ENCODE measurements at regions of chr1 and their contacts with region 1.

Region 1: GRCh38 chr1:26500488-26501175 is 28.4 kb downstream of the HMGN2 start:
- DNase-seq: peak; percentile 93
- H3K4me3 Mint-ChIP-seq: peak overlapping the region; percentile 87
- H3K27ac Mint-ChIP-seq: peak overlapping the region; percentile 96
- H3K4me1 Mint-ChIP-seq: peaks cover 18% of the 10 kb centered on the region
- H3K27me3 Mint-ChIP-seq: no peaks in the 10 kb centered on the region

Region 2: DNA sequence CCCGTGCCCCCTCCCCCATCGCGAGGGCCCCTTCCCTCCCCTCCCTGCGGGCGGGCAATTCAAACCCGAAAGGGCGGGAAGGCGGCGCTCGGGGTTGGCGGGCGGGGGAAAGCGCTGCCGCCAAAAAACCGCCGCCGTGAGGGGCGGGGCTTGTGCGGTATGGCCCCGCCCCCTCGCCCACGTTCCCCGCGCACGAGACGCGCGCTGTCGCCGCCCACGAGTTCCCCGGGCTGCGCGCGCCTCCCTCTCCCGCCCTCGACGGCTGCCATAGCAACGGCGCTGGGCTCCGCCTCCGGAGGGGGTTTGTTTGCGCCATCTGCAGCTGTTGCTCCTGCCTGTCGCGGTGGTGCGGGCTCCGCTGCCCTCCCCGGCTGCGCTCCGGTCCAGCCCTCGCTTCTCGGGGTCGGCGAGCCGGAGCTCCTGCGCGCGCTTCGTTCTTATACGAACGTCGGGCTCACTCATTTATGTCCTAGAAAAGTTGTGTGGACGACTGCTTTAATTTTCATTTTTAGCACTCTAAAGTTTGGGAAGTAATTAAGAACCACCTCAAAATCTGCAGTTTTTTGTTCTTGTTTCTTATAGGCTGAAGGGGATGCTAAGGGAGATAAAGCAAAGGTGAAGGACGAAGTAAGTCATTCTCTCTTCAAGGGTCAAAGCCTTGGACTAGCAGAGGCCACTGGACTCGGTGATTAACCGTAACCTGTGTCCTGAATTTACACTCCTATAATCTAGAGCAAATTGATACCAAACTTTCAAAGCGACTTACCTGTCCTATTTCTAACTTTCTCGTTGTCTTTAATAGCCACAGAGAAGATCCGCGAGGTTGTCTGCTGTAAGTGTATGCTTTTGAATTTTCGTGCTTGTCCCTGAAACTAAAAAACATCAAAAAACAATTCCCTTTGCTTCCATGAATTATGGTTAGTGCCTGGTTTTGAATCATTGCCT is 27.5 kb before region 1 on chr1:
- CTCF ChIA-PET with region 1: interaction called, 3 read pairs
- intact Hi-C with region 1: loop called (anchors 1 kb)
- DNase-seq: peak; percentile 96
- H3K4me3 Mint-ChIP-seq: peak overlapping the region; percentile 87
- H3K27ac Mint-ChIP-seq: peak overlapping the region; percentile 71
- H3K4me1 Mint-ChIP-seq: peaks cover 49% of the 10 kb centered on the region
- H3K27me3 Mint-ChIP-seq: no peaks in the 10 kb centered on the region

Region 3: DNA sequence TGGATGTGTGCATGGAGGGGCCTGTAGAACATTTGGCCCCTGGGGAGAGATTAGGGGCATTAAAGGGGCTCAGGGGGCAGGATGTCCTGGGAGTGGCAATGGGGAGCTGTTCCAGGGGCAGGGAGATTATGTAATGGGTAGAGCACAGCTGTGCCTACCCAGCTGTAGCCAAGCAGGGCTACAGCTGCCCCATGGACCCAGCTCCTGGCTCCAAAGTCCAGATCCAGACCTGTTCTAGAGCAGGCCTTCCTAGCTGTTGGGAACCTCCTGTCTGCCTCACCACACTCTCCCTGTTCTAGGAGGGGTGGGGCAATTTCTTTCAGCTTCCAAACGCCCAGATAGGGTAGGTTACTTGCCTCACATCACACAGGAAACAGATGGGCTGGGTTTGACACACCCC is 34.6 kb after region 1 on chr1:
- CTCF ChIA-PET with region 1: interaction called, 27 read pairs
- intact Hi-C with region 1: loop called (anchors 1 kb)
- DNase-seq: no peak
- H3K4me3 Mint-ChIP-seq: no peak overlapping the region
- H3K27ac Mint-ChIP-seq: no peak overlapping the region
- H3K4me1 Mint-ChIP-seq: peaks cover 59% of the 10 kb centered on the region
- H3K27me3 Mint-ChIP-seq: no peaks in the 10 kb centered on the region

Region 4: GRCh38 chr1:26582836-26583460 is 82.3 kb after region 1 on chr1:
- CTCF ChIA-PET with region 1: interaction called, 4 read pairs
- intact Hi-C with region 1: loop called (anchors 1 kb)
- DNase-seq: peak; percentile 90
- H3K4me3 Mint-ChIP-seq: no peak overlapping the region
- H3K27ac Mint-ChIP-seq: peak overlapping the region; percentile 72
- H3K4me1 Mint-ChIP-seq: peaks cover 51% of the 10 kb centered on the region
- H3K27me3 Mint-ChIP-seq: no peaks in the 10 kb centered on the region

Region 5: DNA sequence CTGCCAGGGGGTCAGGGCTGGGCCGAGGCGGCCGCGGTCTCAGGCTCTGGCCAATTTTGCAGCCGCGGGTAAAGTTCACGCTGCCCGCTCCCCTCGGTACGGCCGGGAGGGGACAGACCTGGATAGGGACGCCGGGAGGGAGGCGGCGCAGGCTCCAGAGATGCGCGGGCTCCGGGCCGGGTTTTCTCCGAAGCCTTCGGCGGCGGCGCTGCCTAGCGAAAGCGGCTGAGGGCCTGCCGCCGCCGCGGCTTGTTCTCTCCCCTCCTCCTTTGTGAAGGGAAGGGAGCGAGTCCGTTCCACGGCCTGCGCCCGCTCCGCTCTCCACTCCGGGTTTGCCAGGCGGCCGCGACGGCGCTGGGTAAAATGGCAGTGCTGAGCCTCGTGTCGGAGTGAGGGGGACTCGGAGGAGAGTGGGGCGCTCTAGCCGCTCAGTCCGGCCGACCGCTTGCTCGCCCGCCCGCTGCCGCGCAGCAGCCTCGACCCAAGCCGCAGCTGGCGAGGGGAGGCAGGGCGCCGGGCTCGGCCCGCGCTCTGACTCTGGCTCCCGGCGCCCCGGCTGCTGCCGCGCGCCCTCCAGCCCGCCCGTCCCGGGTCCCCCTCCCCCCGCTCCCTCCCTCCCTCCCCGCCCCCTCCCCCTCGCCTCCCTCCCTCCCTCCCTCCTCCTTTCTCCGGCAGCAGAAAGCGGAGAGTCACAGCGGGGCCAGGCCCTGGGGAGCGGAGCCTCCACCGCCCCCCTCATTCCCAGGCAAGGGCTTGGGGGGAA is 194.9 kb after region 1 on chr1 and contains the start of gene ARID1A:
- CTCF ChIA-PET with region 1: interaction called, 3 read pairs
- intact Hi-C with region 1: loop called (anchors 2 kb)
- DNase-seq: peak; percentile 95
- H3K4me3 Mint-ChIP-seq: peak within 1 kb of the TSS; percentile 81
- H3K27ac Mint-ChIP-seq: peak within 1 kb of the TSS; percentile 91
- H3K4me1 Mint-ChIP-seq: peaks cover 22% of the 10 kb centered on the region
- H3K27me3 Mint-ChIP-seq: no peaks in the 10 kb centered on the region
- total RNA-seq, gene ARID1A: 65.0 to 65.9 TPM

Measured in activated naive CD4-positive, alpha-beta T cell treated with anti-CD3 and anti-CD28 coated beads for 36 hours (primary cell).